Activated T-helper 1 cell treated with anti-CD3 and anti-CD28 coated beads, Interleukin-12 subunit alpha, Interleukin-12 subunit beta, Interleukin-2, Interleukin-4 antibody, amounts not matched to agents 30 ng/mL and 10 ng/mL and 1 ng/mL, durations not matched to agents 14 hours and 24 hours and 36 hours (primary cell): ENCODE measurements at regions of chr20 and their contacts with region 1.

Region 1: GRCh38 chr20:38748097-38748860 is at the start of gene ACTR5:
- DNase-seq: peak; percentile 94
- H3K4me3 Mint-ChIP-seq: peak within 1 kb of the TSS; percentile 94
- H3K27ac Mint-ChIP-seq: peak within 1 kb of the TSS; percentile 98
- H3K4me1 Mint-ChIP-seq: peaks cover 37% of the 10 kb centered on the region
- H3K27me3 Mint-ChIP-seq: peaks cover 8% of the 10 kb centered on the region
- total RNA-seq, gene ACTR5: 14.9 and 15.2 TPM in 2 replicates

Region 2: GRCh38 chr20:38033310-38034107 is 714.8 kb before region 1 on chr20 and contains the starts of genes RPRD1B and TTI1:
- intact Hi-C with region 1: no loop called
- DNase-seq: peak; percentile 87
- H3K4me3 Mint-ChIP-seq: peak within 1 kb of the TSS; percentile 96
- H3K27ac Mint-ChIP-seq: peak within 1 kb of the TSS; percentile 99
- H3K4me1 Mint-ChIP-seq: peaks cover 72% of the 10 kb centered on the region
- H3K27me3 Mint-ChIP-seq: no peaks in the 10 kb centered on the region
- total RNA-seq, gene RPRD1B: 48.8 and 49.7 TPM in 2 replicates
- total RNA-seq, gene TTI1: 41.7 and 43.1 TPM in 2 replicates

Region 3: DNA sequence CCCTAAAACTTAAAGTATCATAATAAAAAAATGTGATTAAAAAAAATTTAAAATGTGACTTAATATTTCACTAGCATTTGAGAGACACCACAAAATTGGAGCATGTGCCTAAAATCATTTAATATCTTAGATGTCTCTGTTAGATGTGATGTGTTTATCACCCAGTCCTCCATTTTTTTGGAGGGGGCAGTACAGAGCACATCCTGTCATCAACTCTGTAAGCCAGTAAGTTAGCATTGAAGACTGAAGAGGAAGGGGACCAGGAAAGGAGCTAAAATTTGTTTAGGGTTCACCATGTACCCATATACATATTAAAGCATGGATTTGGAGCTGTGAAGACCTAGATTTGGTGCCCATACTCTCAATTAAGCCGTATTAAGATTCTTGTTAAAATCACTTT is 198.0 kb before region 1 on chr20:
- intact Hi-C with region 1: no loop called
- DNase-seq: no peak
- H3K4me3 Mint-ChIP-seq: no peak overlapping the region
- H3K27ac Mint-ChIP-seq: no peak overlapping the region
- H3K4me1 Mint-ChIP-seq: no peaks in the 10 kb centered on the region
- H3K27me3 Mint-ChIP-seq: no peaks in the 10 kb centered on the region

Region 4: GRCh38 chr20:38633577-38634093 is 114.6 kb before region 1 on chr20:
- intact Hi-C with region 1: loop called (anchors 1 kb)
- DNase-seq: peak; percentile 43
- H3K4me3 Mint-ChIP-seq: no peak overlapping the region
- H3K27ac Mint-ChIP-seq: no peak overlapping the region
- H3K4me1 Mint-ChIP-seq: peaks cover 5% of the 10 kb centered on the region
- H3K27me3 Mint-ChIP-seq: peaks cover 7% of the 10 kb centered on the region

Region 5: GRCh38 chr20:38674092-38674764 is 74.1 kb before region 1 on chr20:
- intact Hi-C with region 1: loop called (anchors 1 kb)
- DNase-seq: peak; percentile 38
- H3K4me3 Mint-ChIP-seq: peak overlapping the region; percentile 77
- H3K27ac Mint-ChIP-seq: peak overlapping the region; percentile 74
- H3K4me1 Mint-ChIP-seq: peaks cover 12% of the 10 kb centered on the region
- H3K27me3 Mint-ChIP-seq: peaks cover 35% of the 10 kb centered on the region

Region 6: DNA sequence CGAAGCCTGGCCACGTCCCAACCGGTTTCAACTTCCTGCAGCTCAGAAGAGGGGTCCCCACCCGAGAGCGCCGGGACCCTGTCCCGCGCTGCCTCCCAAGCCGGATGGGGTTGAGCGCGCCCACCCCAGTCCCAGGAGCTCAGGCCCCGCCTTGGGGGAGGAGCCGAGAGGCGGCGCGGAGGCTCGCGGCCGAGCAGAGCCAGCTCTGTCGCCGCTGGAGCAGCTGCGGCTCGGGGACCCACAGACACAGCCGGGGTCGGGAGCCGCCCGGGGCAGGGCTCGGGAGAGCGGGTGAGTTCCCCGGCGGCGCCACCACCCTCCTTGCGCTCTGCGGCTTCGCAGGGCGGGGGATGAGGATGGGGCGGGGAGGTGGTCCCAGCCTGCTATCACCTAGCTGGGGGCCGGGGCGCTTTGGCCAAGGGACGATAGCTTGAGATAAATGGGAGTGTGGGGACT is 57.3 kb after region 1 on chr20 and contains the start of gene PPP1R16B:
- intact Hi-C with region 1: loop called (anchors 1 kb)
- DNase-seq: peak; percentile 79
- H3K4me3 Mint-ChIP-seq: peak within 1 kb of the TSS; percentile 90
- H3K27ac Mint-ChIP-seq: peak within 1 kb of the TSS; percentile 96
- H3K4me1 Mint-ChIP-seq: peaks cover 64% of the 10 kb centered on the region
- H3K27me3 Mint-ChIP-seq: no peaks in the 10 kb centered on the region
- total RNA-seq, gene PPP1R16B: 139 and 143 TPM in 2 replicates

Region 7: DNA sequence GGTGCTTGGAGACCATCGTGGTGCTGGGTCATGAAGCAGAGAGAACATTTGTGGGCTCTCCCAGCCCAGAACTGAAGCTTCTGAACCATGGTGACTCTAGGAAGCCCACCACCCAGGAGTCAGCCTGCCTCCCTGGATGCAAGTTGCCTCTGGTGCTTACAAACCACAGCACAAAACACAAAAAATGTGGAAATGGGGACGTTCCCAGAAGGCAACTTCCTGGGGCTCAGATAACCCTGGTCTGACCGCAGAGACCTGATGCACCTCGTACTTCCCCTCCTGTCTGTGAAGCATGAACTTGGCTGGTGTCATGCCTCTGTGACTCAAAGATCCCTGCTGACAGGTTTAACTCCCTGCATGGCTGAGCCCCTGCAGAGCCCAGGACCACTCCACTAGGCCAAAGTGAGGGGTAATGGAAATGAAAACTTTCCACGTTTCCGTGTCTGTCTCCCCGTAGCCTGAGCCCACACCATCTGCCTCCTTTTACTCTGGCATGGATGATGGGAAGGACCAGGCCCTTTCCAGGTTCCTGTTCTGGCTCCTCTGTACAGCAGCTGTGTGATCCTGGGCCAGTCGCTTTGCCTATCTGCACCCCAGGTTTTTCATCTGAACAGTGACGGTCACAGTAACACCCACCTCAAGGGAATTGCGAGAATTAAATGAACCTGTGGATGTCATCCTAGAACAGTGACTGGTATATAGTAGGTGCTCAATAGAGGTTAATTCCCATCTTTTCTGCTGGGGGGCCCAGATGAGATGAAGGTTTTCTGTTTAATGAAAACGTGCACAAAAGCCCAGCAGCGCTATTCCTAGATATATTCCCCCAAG is 115.0 kb after region 1 on chr20:
- intact Hi-C with region 1: no loop called
- DNase-seq: peak; percentile 45
- H3K4me3 Mint-ChIP-seq: peak overlapping the region; percentile 50
- H3K27ac Mint-ChIP-seq: peak overlapping the region; percentile 89
- H3K4me1 Mint-ChIP-seq: peaks cover 68% of the 10 kb centered on the region
- H3K27me3 Mint-ChIP-seq: peaks cover 1% of the 10 kb centered on the region

Region 8: GRCh38 chr20:38875175-38875993 is 127.1 kb after region 1 on chr20:
- intact Hi-C with region 1: loop called (anchors 2 kb)
- DNase-seq: peak; percentile 68
- H3K4me3 Mint-ChIP-seq: peak overlapping the region; percentile 66
- H3K27ac Mint-ChIP-seq: peak overlapping the region; percentile 96
- H3K4me1 Mint-ChIP-seq: peaks cover 95% of the 10 kb centered on the region
- H3K27me3 Mint-ChIP-seq: no peaks in the 10 kb centered on the region

Region 9: DNA sequence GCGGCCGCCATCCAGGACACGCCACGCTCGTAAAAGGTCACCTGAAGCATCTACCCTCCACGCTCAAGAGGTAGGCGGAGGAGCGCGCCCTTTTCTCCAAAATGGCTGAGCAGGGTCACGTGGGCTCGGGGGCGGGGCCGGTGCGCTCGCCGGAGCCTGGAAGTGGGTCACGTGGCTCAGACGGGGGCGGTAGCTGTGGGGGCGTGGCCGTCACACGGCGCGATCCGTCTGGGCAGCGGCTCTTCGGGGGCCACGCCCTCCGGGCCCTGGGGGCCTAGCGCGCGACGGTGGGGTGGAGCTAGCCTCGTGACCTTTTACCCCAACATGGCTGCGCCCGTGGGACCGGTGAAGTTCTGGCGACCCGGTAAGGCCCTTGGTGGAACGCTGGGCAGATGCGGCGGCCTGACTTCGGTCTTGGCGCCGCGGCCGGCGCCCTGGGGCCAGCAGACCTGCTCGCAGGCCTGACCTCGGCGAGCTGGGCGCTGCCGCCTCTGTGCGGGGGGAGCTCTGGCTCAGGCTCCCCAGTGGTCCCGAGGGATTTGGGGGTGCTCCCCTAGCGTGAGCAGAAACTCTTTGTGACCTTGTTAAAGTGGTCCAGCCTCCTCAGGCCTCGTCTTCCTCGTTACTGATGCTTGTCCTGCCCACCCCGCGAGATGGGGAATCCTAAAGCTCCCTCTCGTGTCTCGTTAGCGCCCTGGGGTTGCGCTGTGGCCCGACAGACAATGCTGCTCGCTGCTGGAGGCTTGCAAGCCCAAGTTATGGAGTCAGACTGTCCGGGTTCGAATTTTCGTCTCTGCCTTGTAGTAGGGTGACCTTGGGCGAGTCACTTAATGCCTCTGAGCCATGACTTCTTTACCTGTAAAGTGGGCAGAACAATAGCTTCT is 214.0 kb after region 1 on chr20 and contains the start of gene DHX35:
- intact Hi-C with region 1: loop called (anchors 1 kb)
- DNase-seq: peak; percentile 99
- H3K4me3 Mint-ChIP-seq: peak within 1 kb of the TSS; percentile 98
- H3K27ac Mint-ChIP-seq: peak within 1 kb of the TSS; percentile 94
- H3K4me1 Mint-ChIP-seq: peaks cover 35% of the 10 kb centered on the region
- H3K27me3 Mint-ChIP-seq: no peaks in the 10 kb centered on the region
- total RNA-seq, gene DHX35: 17.2 and 17.3 TPM in 2 replicates